ENCODE measurements at regions of chr3 and their contacts with region 1.

Region 1: DNA sequence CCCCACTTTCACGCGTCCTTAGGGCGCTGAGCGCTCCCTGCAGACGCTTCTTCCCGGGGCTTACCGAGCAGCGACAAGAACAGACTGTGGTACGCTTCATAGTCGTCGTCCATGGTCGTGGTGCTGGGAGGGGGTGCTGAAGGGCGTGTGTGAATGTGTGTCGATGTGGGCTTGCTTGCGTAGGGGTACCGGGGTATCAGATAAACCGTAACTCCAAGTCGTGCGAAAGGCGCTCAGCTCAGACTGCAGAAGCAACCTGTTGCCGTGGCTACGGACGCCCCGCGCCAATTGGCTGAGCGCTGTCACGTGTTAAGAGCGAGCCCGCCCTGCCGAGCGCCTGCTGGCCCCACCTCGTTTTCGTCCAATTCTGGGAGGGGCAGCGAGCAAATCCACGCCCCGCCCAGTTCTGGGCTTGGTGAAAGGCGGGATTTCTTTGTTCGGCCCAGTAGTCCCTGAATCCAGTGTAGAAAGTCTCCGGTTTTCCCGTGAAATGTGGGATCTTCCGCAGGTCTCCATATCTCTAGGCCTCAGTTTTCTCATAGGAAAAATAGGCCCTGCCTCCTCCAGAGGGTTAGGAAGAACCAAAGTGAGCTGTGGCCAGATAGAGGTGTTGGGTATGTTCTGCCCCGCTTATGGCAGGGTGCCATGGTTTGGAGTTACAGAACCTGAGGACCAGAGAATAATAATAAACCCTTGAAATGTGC is at the start of gene EFCAB12:
- DNase-seq: peak; percentile 78 to 91 (median 87)
- H3K4me3 ChIP-seq: peak within 1 kb of the TSS; percentile 71
- H3K4me3 Mint-ChIP-seq: peak within 1 kb of the TSS; percentile 46 to 88 (median 84)
- H3K27ac ChIP-seq: peak within 1 kb of the TSS; percentile 3
- H3K27ac Mint-ChIP-seq: peak within 1 kb of the TSS; percentile 25 to 95 (median 80)
- H3K4me1 ChIP-seq: peaks cover 7% of the 10 kb centered on the region
- H3K4me1 Mint-ChIP-seq: peaks cover 15 to 26% (median 17%) of the 10 kb centered on the region in 3 donors
- H3K27me3 ChIP-seq: no peaks in the 10 kb centered on the region
- H3K27me3 Mint-ChIP-seq: no peaks in the 10 kb centered on the region
- total RNA-seq, gene EFCAB12: 0.39 to 0.40 TPM

Region 2: DNA sequence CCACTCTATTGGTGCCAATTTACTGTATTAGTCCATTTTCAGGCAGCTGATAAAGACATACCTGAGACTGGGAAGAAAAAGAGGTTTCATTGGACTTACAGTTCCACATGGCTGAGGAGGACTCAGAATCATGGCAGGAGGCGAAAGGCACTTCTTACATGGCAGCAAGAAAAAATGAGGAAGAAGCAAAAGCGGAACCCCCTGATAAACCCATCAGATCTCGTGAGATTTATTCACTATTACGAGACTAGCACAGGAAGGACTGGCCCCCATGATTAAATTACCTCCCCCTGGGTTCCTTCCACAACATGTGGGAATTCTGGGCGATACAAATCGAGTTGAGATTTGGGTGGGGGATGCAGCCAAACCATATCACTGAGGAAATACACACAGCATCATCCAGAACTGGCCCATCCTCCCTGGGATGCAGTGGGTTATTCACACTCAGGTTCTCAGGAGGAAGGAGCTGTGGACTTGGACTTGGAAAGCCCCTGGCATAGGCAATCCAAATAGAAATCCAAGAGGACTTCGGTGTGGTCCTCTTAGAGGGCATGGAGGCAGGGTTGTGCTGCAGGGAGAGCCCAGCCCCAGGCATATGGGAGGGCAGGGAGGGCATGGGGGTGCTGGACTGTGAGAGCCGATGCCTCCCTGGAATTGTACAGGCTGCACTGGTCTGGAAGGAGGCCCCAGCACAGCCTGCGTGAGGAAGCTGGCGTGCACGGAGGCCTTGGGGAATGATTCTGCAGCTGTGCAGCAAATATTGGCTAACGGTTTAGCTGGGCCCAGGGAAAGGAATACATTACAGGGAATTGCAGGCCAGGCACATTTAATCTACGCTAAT is 63.0 kb before region 1 on chr3:
- CTCF ChIA-PET with region 1: no interaction called
- POLR2A ChIA-PET with region 1: no interaction called
- DNase-seq: no peak
- H3K4me3 ChIP-seq: no peak overlapping the region
- H3K4me3 Mint-ChIP-seq: no peak overlapping the region
- H3K27ac ChIP-seq: no peak overlapping the region
- H3K27ac Mint-ChIP-seq: no peak overlapping the region
- H3K4me1 ChIP-seq: no peaks in the 10 kb centered on the region
- H3K4me1 Mint-ChIP-seq: no peaks in the 10 kb centered on the region
- H3K27me3 ChIP-seq: no peaks in the 10 kb centered on the region
- H3K27me3 Mint-ChIP-seq: peaks cover 0 to 2% of the 10 kb centered on the region in 2 donors

Region 3: GRCh38 chr3:129439817-129440617 is 11.5 kb after region 1 on chr3 and contains the starts of genes IFT122 and MBD4:
- CTCF ChIA-PET with region 1: interaction called, 4 read pairs
- POLR2A ChIA-PET with region 1: interaction called, 15 read pairs
- DNase-seq: peak; percentile 97 to 99 (median 99)
- H3K4me3 ChIP-seq: peak within 1 kb of the TSS; percentile 95
- H3K4me3 Mint-ChIP-seq: peak within 1 kb of the TSS; percentile 88 to 99 (median 95)
- H3K27ac ChIP-seq: peak within 1 kb of the TSS; percentile 81
- H3K27ac Mint-ChIP-seq: peak within 1 kb of the TSS; percentile 92 to 100 (median 97)
- H3K4me1 ChIP-seq: peaks cover 50% of the 10 kb centered on the region
- H3K4me1 Mint-ChIP-seq: peaks cover 64 to 85% (median 74%) of the 10 kb centered on the region in 3 donors
- H3K27me3 ChIP-seq: no peaks in the 10 kb centered on the region
- H3K27me3 Mint-ChIP-seq: peaks cover 0 to 3% of the 10 kb centered on the region in 2 donors
- total RNA-seq, gene IFT122: 16.4 to 16.5 TPM
- total RNA-seq, gene MBD4: 48.0 to 48.1 TPM